Activated CD4-positive, alpha-beta T cell treated with anti-CD3 and anti-CD28 coated beads, Interleukin-2, amount 10 ng/mL, durations not matched to agents 24 days and 14 days (primary cell): ENCODE measurements at regions of chr4 and their contacts with region 1.

Region 1: GRCh38 chr4:152094970-152095700 is 334.3 kb upstream of the GATB start:
- DNase-seq: no peak
- H3K4me3 Mint-ChIP-seq: no peak overlapping the region
- H3K27ac Mint-ChIP-seq: no peak overlapping the region
- H3K4me1 Mint-ChIP-seq: peaks cover 55% of the 10 kb centered on the region
- H3K27me3 Mint-ChIP-seq: no peaks in the 10 kb centered on the region

Region 2: DNA sequence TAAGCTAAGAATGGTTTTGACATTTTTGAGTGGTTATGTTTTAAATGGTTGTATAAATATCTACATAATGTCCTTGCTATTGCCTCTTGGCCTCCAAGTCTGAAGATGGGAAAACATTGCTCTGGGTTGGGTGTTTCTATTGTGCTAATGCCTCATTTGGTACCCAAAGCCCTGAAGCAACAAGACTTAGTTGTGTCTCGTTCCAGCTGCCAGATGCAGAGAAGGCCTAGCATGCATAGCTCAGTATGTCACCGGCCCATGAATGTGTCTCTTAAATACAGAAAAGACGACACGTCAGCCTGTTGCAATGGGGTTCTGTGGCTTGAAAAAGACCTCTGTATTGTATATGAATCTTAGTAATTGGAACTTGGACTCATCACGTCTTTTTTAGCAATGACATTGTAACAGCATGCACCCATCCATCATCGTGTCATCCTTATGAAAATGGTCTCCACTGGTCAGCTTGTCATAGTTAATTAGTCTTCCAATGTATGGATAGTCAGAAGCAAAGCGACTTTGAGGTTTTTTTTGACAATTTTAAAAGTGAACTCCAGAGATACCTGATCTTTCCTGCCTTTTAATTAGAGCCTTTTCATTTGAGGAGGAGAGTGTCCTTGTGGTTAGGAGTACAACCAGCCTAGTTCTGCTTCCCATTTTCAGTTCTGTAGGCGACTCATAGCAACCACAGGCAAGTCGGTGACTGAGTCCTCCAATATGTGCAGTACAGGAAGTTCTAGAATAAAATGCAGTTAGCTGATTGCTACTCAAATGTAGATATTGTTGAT is 207.9 kb before region 1 on chr4:
- intact Hi-C with region 1: loop called (anchors 10 kb)
- DNase-seq: no peak
- H3K4me3 Mint-ChIP-seq: no peak overlapping the region
- H3K27ac Mint-ChIP-seq: peak overlapping the region; percentile 57
- H3K4me1 Mint-ChIP-seq: peaks cover 28% of the 10 kb centered on the region
- H3K27me3 Mint-ChIP-seq: no peaks in the 10 kb centered on the region

Region 3: GRCh38 chr4:152073351-152074087 is 21.6 kb before region 1 on chr4:
- intact Hi-C with region 1: no loop called
- DNase-seq: no peak
- H3K4me3 Mint-ChIP-seq: no peak overlapping the region
- H3K27ac Mint-ChIP-seq: no peak overlapping the region
- H3K4me1 Mint-ChIP-seq: peaks cover 17% of the 10 kb centered on the region
- H3K27me3 Mint-ChIP-seq: no peaks in the 10 kb centered on the region

Region 4: GRCh38 chr4:152559641-152560040 is 464.5 kb after region 1 on chr4:
- intact Hi-C with region 1: loop called (anchors 10 kb)
- DNase-seq: no peak
- H3K4me3 Mint-ChIP-seq: no peak overlapping the region
- H3K27ac Mint-ChIP-seq: no peak overlapping the region
- H3K4me1 Mint-ChIP-seq: peaks cover 19% of the 10 kb centered on the region
- H3K27me3 Mint-ChIP-seq: no peaks in the 10 kb centered on the region